Naive thymus-derived CD4-positive, alpha-beta T cell (primary cell): ENCODE measurements at regions of chr9 and their contacts with region 1.

Region 1: GRCh38 chr9:115591584-115591984 is 473.6 kb upstream of the TNC start:
- DNase-seq: no peak
- ATAC-seq: no peak
- H3K4me3 ChIP-seq: no peak overlapping the region
- H3K4me3 Mint-ChIP-seq: no peak overlapping the region
- H3K27ac ChIP-seq: no peak overlapping the region
- H3K27ac Mint-ChIP-seq: no peak overlapping the region
- H3K4me1 ChIP-seq: no peaks in the 10 kb centered on the region
- H3K4me1 Mint-ChIP-seq: no peaks in the 10 kb centered on the region
- H3K27me3 ChIP-seq: no peaks in the 10 kb centered on the region
- H3K27me3 Mint-ChIP-seq: peaks cover 16 to 38% (median 22%) of the 10 kb centered on the region in 5 donors

Region 2: DNA sequence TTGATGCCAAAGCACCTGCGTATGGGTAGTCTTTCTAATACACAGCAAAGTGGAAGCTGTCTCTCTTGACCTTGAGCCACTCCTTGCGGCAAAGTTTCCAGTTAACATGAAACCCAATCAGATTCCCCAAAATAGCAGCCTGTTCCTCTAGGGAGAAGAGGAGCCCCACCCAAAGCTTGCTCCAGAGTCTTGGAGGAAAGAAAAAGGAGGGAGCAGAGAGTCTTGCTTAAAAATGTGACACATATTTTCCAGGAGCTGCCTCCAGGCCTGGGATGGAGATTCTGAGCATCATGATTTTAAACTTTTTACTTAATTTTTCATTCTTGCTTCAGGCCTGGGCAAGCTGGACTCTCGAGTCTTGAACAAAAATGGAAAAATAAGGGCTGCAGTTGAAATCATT is 250.2 kb before region 1 on chr9:
- CTCF ChIA-PET with region 1: no interaction called
- POLR2A ChIA-PET with region 1: no interaction called
- intact Hi-C with region 1: no loop called
- DNase-seq: no peak
- ATAC-seq: no peak
- H3K4me3 ChIP-seq: no peak overlapping the region
- H3K4me3 Mint-ChIP-seq: no peak overlapping the region
- H3K27ac ChIP-seq: no peak overlapping the region
- H3K27ac Mint-ChIP-seq: no peak overlapping the region
- H3K4me1 ChIP-seq: no peaks in the 10 kb centered on the region
- H3K4me1 Mint-ChIP-seq: no peaks in the 10 kb centered on the region
- H3K27me3 ChIP-seq: no peaks in the 10 kb centered on the region
- H3K27me3 Mint-ChIP-seq: peaks cover 0 to 37% (median 26%) of the 10 kb centered on the region in 5 donors

Region 3: GRCh38 chr9:116494815-116495634 is 903.4 kb after region 1 on chr9:
- CTCF ChIA-PET with region 1: no interaction called
- POLR2A ChIA-PET with region 1: no interaction called
- intact Hi-C with region 1: loop called (anchors 5 kb)
- DNase-seq: peak in 4 of 9 donors; percentile 3 to 23 (median 6)
- ATAC-seq: no peak
- H3K4me3 ChIP-seq: no peak overlapping the region
- H3K4me3 Mint-ChIP-seq: no peak overlapping the region
- H3K27ac ChIP-seq: no peak overlapping the region
- H3K27ac Mint-ChIP-seq: no peak overlapping the region
- H3K4me1 ChIP-seq: no peaks in the 10 kb centered on the region
- H3K4me1 Mint-ChIP-seq: peaks cover 0 to 4% (median 0%) of the 10 kb centered on the region in 7 donors
- H3K27me3 ChIP-seq: no peaks in the 10 kb centered on the region
- H3K27me3 Mint-ChIP-seq: no peaks in the 10 kb centered on the region

Region 4: DNA sequence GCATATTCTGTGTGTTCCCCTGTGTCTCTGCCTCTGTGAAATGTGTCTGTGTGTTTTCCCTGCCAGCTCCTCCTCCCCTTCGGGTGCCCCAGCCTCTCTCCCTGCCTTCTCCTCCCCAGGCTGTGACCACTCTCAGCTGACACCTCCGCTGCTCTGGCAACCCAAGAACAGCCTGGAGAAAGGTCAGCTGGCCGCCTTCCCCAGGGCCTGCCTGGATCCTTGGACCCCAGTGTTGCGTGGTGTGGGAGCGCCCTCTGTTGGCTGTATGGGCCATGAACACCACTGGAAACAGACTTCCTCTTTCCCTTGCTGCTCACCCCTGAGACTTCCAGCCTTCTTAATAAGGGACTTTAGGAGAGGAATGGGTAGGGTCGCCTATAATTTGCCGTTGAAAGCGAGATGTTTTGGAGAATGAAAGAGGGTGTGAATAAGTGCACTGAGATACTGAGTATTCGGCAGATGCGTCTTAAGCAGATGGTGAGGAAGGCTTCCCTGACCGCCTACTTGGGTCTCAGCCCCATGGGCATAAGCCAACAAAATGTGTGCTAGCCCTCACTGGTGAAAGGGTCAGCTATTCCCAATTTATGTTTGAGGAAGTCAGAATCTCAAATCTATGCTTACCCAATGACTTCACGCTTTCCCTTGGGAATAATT is 980.6 kb after region 1 on chr9:
- CTCF ChIA-PET with region 1: no interaction called
- POLR2A ChIA-PET with region 1: no interaction called
- intact Hi-C with region 1: loop called in 1 of 2 experiments (anchors 5 kb)
- DNase-seq: peak in 1 of 9 donors; percentile 24
- ATAC-seq: peak; percentile 34
- H3K4me3 ChIP-seq: no peak overlapping the region
- H3K4me3 Mint-ChIP-seq: no peak overlapping the region
- H3K27ac ChIP-seq: no peak overlapping the region
- H3K27ac Mint-ChIP-seq: no peak overlapping the region
- H3K4me1 ChIP-seq: no peaks in the 10 kb centered on the region
- H3K4me1 Mint-ChIP-seq: no peaks in the 10 kb centered on the region
- H3K27me3 ChIP-seq: no peaks in the 10 kb centered on the region
- H3K27me3 Mint-ChIP-seq: no peaks in the 10 kb centered on the region

Region 5: DNA sequence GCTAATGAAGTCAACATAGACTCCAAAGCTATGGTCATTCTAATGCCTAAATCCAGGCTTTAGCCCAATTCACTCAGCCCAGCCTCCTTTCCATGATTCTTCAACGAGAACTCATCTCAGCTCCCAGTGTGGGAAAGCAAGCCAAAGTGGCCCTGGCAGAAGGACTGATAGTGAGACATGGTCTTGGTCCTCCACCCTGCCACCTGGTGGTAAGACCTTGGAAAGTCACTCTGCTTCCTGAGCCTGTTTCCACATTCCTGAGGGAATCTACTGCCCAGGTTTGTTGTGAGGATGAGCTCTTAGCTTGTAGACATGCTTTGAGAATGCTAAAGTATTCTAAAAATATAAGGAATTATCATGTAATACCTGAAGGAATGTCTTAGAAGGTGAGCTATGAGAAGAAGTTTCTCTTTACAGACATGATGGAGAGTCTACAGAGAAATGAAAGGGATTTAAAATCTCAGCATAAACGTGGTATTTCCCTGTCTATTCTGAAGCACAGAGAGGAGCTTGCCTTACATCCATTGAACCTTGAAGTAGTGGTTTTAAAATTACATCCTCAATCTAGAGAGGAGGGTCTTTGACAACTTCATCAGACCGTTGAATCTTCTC is 1269.0 kb after region 1 on chr9:
- CTCF ChIA-PET with region 1: interaction called, 3 read pairs
- POLR2A ChIA-PET with region 1: no interaction called
- intact Hi-C with region 1: loop called in 1 of 2 experiments (anchors 5 kb)
- DNase-seq: no peak
- ATAC-seq: no peak
- H3K4me3 ChIP-seq: no peak overlapping the region
- H3K4me3 Mint-ChIP-seq: no peak overlapping the region
- H3K27ac ChIP-seq: no peak overlapping the region
- H3K27ac Mint-ChIP-seq: no peak overlapping the region
- H3K4me1 ChIP-seq: no peaks in the 10 kb centered on the region
- H3K4me1 Mint-ChIP-seq: no peaks in the 10 kb centered on the region
- H3K27me3 ChIP-seq: no peaks in the 10 kb centered on the region
- H3K27me3 Mint-ChIP-seq: peaks cover 0 to 31% (median 12%) of the 10 kb centered on the region in 5 donors